ENCODE measurements at regions of chr12 and their contacts with region 1.

Region 1: DNA sequence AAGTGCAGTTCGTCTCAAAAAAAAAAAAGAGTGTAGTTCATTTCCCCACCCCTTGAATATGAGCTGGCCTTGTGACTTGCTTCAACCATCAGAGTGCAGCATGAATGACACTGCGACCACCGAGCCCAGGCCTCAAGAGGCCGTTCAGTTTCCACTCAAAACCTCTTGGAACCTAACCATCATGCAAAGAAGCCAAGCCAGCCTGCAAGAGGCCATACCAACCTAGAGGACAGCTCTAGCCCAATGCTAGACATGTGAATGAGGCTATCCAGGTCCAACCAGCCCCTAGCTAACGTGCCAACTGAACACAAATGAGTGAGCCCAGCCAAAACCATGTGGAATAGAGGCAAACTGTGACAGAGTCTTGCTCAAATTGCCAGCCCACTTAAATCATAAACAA is 29.7 kb downstream of the R3HDM2 start:
- DNase-seq: no peak
- H3K4me3 Mint-ChIP-seq: no peak overlapping the region
- H3K27ac Mint-ChIP-seq: no peak overlapping the region
- H3K4me1 Mint-ChIP-seq: peaks cover 21% of the 10 kb centered on the region
- H3K27me3 Mint-ChIP-seq: no peaks in the 10 kb centered on the region

Region 2: DNA sequence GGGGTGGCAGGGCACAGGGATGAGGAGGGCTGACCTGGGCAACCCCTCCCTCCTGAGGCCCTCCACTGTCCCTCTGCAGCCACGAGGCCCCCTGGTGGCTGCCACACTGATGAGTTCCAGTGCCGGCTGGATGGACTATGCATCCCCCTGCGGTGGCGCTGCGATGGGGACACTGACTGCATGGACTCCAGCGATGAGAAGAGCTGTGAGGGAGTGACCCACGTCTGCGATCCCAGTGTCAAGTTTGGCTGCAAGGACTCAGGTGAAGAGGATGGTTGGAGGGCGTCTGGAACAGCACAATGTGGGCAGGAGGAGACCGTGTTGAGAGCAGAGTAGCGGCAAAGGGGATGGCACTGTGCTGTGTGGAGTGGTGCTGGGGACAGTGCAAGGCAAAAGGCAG is 228.1 kb before region 1 on chr12:
- CTCF ChIA-PET with region 1: no interaction called
- intact Hi-C with region 1: no loop called
- DNase-seq: peak; percentile 30
- H3K4me3 Mint-ChIP-seq: no peak overlapping the region
- H3K27ac Mint-ChIP-seq: no peak overlapping the region
- H3K4me1 Mint-ChIP-seq: no peaks in the 10 kb centered on the region
- H3K27me3 Mint-ChIP-seq: no peaks in the 10 kb centered on the region

Region 3: GRCh38 chr12:57340104-57340503 is 61.1 kb before region 1 on chr12:
- CTCF ChIA-PET with region 1: interaction called, 3 read pairs
- intact Hi-C with region 1: loop called (anchors 1 kb)
- DNase-seq: no peak
- H3K4me3 Mint-ChIP-seq: no peak overlapping the region
- H3K27ac Mint-ChIP-seq: no peak overlapping the region
- H3K4me1 Mint-ChIP-seq: peaks cover 42% of the 10 kb centered on the region
- H3K27me3 Mint-ChIP-seq: no peaks in the 10 kb centered on the region

Region 4: GRCh38 chr12:57372233-57372632 is 28.9 kb before region 1 on chr12:
- CTCF ChIA-PET with region 1: no interaction called
- intact Hi-C with region 1: loop called (anchors 5 kb)
- DNase-seq: no peak
- H3K4me3 Mint-ChIP-seq: no peak overlapping the region
- H3K27ac Mint-ChIP-seq: no peak overlapping the region
- H3K4me1 Mint-ChIP-seq: peaks cover 8% of the 10 kb centered on the region
- H3K27me3 Mint-ChIP-seq: no peaks in the 10 kb centered on the region

Region 5: DNA sequence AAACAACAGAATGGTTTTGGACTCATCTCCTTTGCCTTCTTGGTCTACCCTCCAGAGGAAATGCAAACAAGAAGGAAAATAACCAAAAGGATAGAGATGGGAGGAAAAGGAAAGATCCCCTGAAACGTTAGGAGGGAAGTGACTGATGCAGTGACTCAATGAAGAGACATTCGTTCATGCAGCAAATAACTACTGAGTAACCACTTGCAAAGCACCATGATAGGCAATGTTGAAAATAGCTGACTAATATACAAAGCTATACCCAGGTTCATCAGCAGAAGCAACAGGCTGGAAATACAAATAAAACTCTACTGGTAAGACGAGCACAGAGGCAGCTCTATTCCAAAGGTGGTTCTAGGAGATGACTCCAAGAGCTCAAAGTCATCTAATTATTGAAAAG is 12.1 kb before region 1 on chr12:
- CTCF ChIA-PET with region 1: no interaction called
- intact Hi-C with region 1: no loop called
- DNase-seq: no peak
- H3K4me3 Mint-ChIP-seq: no peak overlapping the region
- H3K27ac Mint-ChIP-seq: no peak overlapping the region
- H3K4me1 Mint-ChIP-seq: peaks cover 10% of the 10 kb centered on the region
- H3K27me3 Mint-ChIP-seq: no peaks in the 10 kb centered on the region

Measured in activated naive CD4-positive, alpha-beta T cell treated with anti-CD3 and anti-CD28 coated beads for 36 hours (primary cell).